Caco-2 (cell line): ENCODE measurements at regions of chr18 and their contacts with region 1.

Region 1: GRCh38 chr18:49708662-49709346 is 104.5 kb downstream of the ACAA2 start:
- DNase-seq: no peak
- H3K4me3 ChIP-seq: no peak overlapping the region
- H3K4me3 Mint-ChIP-seq: no peak overlapping the region
- H3K27ac Mint-ChIP-seq: peak overlapping the region; percentile 71
- H3K4me1 ChIP-seq: peaks cover 18% of the 10 kb centered on the region
- H3K4me1 Mint-ChIP-seq: peaks cover 7% of the 10 kb centered on the region
- H3K27me3 ChIP-seq: no peaks in the 10 kb centered on the region
- H3K27me3 Mint-ChIP-seq: no peaks in the 10 kb centered on the region
- CTCF ChIP-seq: no peak

Region 2: GRCh38 chr18:49544362-49544761 is 164.4 kb before region 1 on chr18:
- CTCF ChIA-PET with region 1: no interaction called
- POLR2A ChIA-PET with region 1: no interaction called
- intact Hi-C with region 1: no loop called
- DNase-seq: no peak
- H3K4me3 ChIP-seq: no peak overlapping the region
- H3K4me3 Mint-ChIP-seq: no peak overlapping the region
- H3K27ac Mint-ChIP-seq: no peak overlapping the region
- H3K4me1 ChIP-seq: no peaks in the 10 kb centered on the region; the same call in 1 of the 2 replicates
- H3K4me1 Mint-ChIP-seq: no peaks in the 10 kb centered on the region
- H3K27me3 ChIP-seq: no peaks in the 10 kb centered on the region
- H3K27me3 Mint-ChIP-seq: no peaks in the 10 kb centered on the region
- CTCF ChIP-seq: no peak

Region 3: GRCh38 chr18:49561289-49562193 is 147.3 kb before region 1 on chr18 and contains the start of gene LIPG:
- CTCF ChIA-PET with region 1: no interaction called
- POLR2A ChIA-PET with region 1: no interaction called
- intact Hi-C with region 1: no loop called
- DNase-seq: peak; percentile 82 to 84
- H3K4me3 ChIP-seq: peak within 1 kb of the TSS; percentile 56
- H3K4me3 Mint-ChIP-seq: peak within 1 kb of the TSS; percentile 98
- H3K27ac Mint-ChIP-seq: peak within 1 kb of the TSS; percentile 92
- H3K4me1 ChIP-seq: no peaks in the 10 kb centered on the region
- H3K4me1 Mint-ChIP-seq: no peaks in the 10 kb centered on the region
- H3K27me3 ChIP-seq: no peaks in the 10 kb centered on the region
- H3K27me3 Mint-ChIP-seq: no peaks in the 10 kb centered on the region
- CTCF ChIP-seq: no peak
- total RNA-seq, gene LIPG: 86.7 and 87.5 TPM in 2 replicates

Region 4: GRCh38 chr18:49690307-49690706 is 18.5 kb before region 1 on chr18:
- CTCF ChIA-PET with region 1: interaction called, 3 read pairs
- POLR2A ChIA-PET with region 1: no interaction called
- intact Hi-C with region 1: loop called (anchors 2 kb)
- DNase-seq: no peak
- H3K4me3 ChIP-seq: no peak overlapping the region
- H3K4me3 Mint-ChIP-seq: no peak overlapping the region
- H3K27ac Mint-ChIP-seq: no peak overlapping the region
- H3K4me1 ChIP-seq: peaks cover 19% of the 10 kb centered on the region
- H3K4me1 Mint-ChIP-seq: peaks cover 20% of the 10 kb centered on the region
- H3K27me3 ChIP-seq: no peaks in the 10 kb centered on the region
- H3K27me3 Mint-ChIP-seq: no peaks in the 10 kb centered on the region
- CTCF ChIP-seq: no peak

Region 5: DNA sequence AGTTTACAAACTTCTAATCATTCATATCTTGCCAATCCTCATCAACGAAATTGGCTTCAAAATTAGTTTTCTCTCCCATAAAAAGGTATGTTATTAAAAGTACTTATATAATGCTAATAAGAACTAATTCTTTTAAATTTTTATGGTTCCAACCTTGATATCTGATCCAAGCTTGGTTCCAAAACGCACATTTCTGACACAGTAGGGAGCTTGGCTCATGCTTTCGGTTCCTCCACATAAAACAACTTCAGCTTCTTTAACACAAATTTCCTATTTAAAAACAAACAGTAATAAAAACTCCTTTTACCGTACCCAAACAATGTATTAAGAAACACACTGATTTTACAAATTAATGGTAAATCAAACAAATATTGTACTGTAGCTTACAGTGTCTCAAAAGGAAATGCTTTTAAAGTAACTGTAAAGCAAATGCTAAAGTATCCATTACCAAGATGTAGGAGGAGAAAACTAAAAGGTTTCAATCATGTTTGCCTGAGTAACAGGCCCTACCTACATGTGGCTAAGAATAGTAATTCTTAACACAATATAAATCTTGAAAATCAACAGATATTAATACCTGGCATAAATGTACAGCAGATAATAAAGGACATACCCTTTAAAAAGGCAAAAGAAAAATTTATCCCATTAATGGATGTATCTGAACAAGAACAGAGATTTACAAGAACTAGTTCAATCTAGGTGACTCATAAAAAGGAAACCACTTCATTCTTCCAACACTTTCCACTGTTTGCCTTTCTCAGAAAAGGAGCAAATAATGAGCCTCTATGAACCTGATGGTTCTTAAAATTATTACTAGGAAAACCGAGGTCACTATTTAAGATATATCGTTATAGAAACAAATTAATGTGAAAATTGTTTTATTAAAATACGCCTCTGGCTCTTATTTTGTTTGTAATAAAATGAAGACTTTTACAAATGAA is 87.1 kb after region 1 on chr18:
- CTCF ChIA-PET with region 1: no interaction called
- POLR2A ChIA-PET with region 1: no interaction called
- intact Hi-C with region 1: no loop called
- DNase-seq: no peak
- H3K4me3 ChIP-seq: no peak overlapping the region
- H3K4me3 Mint-ChIP-seq: no peak overlapping the region
- H3K27ac Mint-ChIP-seq: no peak overlapping the region
- H3K4me1 ChIP-seq: no peaks in the 10 kb centered on the region
- H3K4me1 Mint-ChIP-seq: no peaks in the 10 kb centered on the region
- H3K27me3 ChIP-seq: no peaks in the 10 kb centered on the region
- H3K27me3 Mint-ChIP-seq: no peaks in the 10 kb centered on the region
- CTCF ChIP-seq: no peak

Region 6: GRCh38 chr18:50128506-50129271 is 419.9 kb after region 1 on chr18:
- CTCF ChIA-PET with region 1: no interaction called
- POLR2A ChIA-PET with region 1: no interaction called
- intact Hi-C with region 1: no loop called
- DNase-seq: peak in 1 of 2 experiments; percentile 37
- H3K4me3 ChIP-seq: no peak overlapping the region
- H3K4me3 Mint-ChIP-seq: no peak overlapping the region
- H3K27ac Mint-ChIP-seq: peak overlapping the region; percentile 76
- H3K4me1 ChIP-seq: peaks cover 10% of the 10 kb centered on the region
- H3K4me1 Mint-ChIP-seq: peaks cover 13% of the 10 kb centered on the region
- H3K27me3 ChIP-seq: no peaks in the 10 kb centered on the region
- H3K27me3 Mint-ChIP-seq: no peaks in the 10 kb centered on the region
- CTCF ChIP-seq: no peak